Lower leg skin (tissue), 4 donors: ENCODE measurements at regions of chr10 and their contacts with region 1.

Region 1: DNA sequence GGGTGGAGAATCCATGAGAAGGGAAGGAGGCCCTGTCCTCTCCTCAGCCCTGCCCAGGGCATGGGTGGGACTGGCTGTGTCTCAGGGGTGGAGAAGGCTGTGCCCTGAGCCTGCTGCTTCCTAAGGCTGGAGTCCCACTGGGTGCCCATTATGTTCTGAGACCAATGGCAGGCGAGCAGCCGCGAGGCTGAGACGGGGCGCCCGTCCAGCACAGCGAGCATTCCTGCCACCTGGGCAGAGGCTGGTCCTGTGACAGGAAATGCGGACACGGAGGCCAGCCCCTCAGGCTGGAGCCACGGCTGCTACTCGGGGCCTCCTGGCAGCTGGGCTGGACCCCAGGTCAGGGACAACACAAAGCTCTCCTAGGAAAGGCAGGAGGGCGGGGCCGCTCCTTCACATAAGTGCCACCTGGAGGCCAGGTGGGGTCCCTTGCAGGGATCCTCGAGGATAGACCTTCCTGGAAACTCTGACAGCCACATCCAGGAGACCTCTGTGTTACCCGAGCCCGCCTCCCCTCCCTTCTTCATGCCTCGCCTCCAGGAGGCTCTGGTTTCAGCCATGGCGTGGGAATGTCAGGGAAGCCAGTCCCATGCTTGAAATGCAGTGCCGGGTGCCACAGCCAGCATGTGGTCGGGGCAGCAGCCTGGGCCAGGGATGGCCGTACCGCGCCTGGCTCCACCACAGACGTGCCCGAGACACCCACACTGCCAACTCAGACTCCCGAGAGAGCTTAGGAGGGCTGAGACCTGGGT is 173.9 kb downstream of the USP6NL start:
- DNase-seq: peak in 1 of 2 donors; percentile 70
- H3K4me3 ChIP-seq: no peak overlapping the region
- CTCF ChIP-seq: no peak
- POLR2A ChIP-seq: no peak

Region 2: DNA sequence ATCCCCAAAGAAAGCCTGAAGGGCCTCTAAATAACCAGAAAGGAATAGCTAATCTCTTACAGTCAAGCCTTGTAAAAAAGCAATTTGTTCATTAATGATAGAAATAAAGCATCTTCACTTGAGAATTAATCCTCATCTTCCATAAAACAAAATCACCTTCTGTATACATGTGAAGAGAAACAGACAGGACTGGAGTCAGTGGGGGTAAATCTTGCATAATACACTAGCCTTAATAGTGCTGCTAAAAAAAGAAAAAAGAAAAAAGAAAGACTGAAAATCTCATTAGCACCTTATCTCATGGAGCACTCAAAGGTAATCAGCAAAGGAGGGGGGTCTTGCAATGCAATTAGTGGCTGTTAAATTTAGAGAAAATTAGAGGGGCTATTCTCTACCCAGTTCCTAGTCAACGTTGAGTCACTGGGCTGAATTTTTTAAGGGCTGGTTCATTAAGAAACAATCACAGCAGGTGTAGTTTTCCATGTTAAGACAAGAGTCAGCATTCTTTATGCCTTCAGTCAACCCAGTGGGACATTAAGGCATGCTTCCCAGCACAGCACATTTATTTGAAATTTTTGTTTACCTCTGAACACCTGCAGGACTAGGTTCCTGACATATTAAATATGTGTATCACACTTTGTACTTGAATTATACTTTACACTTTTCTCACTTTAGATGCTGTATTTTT is 1875.6 kb before region 1 on chr10:
- intact Hi-C with region 1: loop called (anchors 5 kb)
- DNase-seq: no peak
- H3K4me3 ChIP-seq: no peak overlapping the region
- CTCF ChIP-seq: no peak
- POLR2A ChIP-seq: no peak